ENCODE measurements at regions of chr6 and their contacts with region 1.

Region 1: GRCh38 chr6:84774157-84774984 is 10.0 kb upstream of the TBX18 start:
- DNase-seq: peak; percentile 41 to 87
- H3K4me3 ChIP-seq: peak overlapping the region; percentile 62 to 79
- H3K27ac ChIP-seq: peak overlapping the region; percentile 99 to 100
- H3K4me1 ChIP-seq: peaks cover 0 to 9% (median 0%) of the 10 kb centered on the region in 4 donors
- H3K27me3 ChIP-seq: no peaks in the 10 kb centered on the region
- CTCF ChIP-seq: peak; percentile 65 to 83

Region 2: GRCh38 chr6:84425971-84426705 is 348.2 kb before region 1 on chr6:
- intact Hi-C with region 1: loop called (anchors 1 kb)
- DNase-seq: no peak
- H3K4me3 ChIP-seq: no peak overlapping the region
- H3K27ac ChIP-seq: peak overlapping the region; percentile 65 to 70
- H3K4me1 ChIP-seq: peaks cover 0 to 42% (median 2%) of the 10 kb centered on the region in 4 donors
- H3K27me3 ChIP-seq: no peaks in the 10 kb centered on the region
- CTCF ChIP-seq: no peak

Region 3: DNA sequence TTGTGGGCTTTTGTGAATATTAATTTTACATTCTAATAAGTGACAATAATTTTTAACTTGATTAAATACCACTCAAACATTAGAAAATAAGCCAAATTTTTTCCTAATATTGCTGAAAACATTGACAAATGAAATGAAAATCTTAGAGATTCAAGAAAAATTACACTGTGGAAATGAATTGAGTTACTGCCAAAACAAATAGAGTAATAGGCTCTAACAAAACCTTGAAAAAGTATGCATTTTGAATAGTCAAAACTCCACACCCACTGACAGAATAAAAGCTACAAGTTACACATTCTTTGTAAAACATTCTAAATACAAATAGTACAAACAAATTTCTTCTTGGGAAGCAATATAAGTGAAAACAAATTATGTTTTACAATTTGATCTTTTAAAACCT is 15.9 kb before region 1 on chr6:
- intact Hi-C with region 1: loop called (anchors 2 kb)
- DNase-seq: no peak
- H3K4me3 ChIP-seq: peak overlapping the region; percentile 93 to 98
- H3K27ac ChIP-seq: peak overlapping the region; percentile 99 to 100
- H3K4me1 ChIP-seq: peaks cover 0 to 61% (median 10%) of the 10 kb centered on the region in 4 donors
- H3K27me3 ChIP-seq: no peaks in the 10 kb centered on the region
- CTCF ChIP-seq: no peak

Region 4: GRCh38 chr6:85323435-85324040 is 549.2 kb after region 1 on chr6:
- intact Hi-C with region 1: loop called (anchors 10 kb)
- DNase-seq: peak; percentile 81 to 83
- H3K4me3 ChIP-seq: no peak overlapping the region
- H3K27ac ChIP-seq: peak overlapping the region in 1 of 2 donors; percentile 13
- H3K4me1 ChIP-seq: peaks cover 0 to 21% (median 0%) of the 10 kb centered on the region in 4 donors
- H3K27me3 ChIP-seq: no peaks in the 10 kb centered on the region
- CTCF ChIP-seq: peak; percentile 79 to 87